Prostate gland (tissue), 2 donors: ENCODE measurements at regions of chr3 and their contacts with region 1.

Region 1: GRCh38 chr3:58630076-58630709 is 36.4 kb downstream of the FAM3D start:
- DNase-seq: peak; percentile 63
- H3K4me3 ChIP-seq: no peak overlapping the region
- H3K27ac ChIP-seq: peak overlapping the region; percentile 50 to 71
- H3K4me1 ChIP-seq: peaks cover 22% of the 10 kb centered on the region
- H3K27me3 ChIP-seq: no peaks in the 10 kb centered on the region
- CTCF ChIP-seq: peak; percentile 91 to 98 (median 96)
- POLR2A ChIP-seq: no peak

Region 2: DNA sequence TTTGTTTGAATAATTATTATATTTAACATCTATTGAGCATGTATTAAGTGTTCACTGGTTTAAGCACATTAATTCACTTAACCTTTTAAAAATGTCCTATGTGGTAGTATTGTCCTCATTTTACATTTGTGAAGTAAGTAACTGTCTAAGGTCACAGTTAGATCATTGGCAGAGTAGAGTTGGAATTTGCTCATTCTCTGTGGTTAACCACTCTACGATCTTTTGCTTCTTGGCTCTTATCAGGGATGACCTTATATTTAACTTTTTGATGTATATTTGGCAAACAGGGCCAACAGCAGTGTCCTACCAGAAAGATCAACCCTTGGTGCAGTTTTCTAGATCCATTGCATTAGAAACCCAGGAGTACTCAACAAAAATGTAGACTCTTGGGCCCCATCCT is 263.5 kb before region 1 on chr3:
- intact Hi-C with region 1: no loop called
- DNase-seq: no peak
- H3K4me3 ChIP-seq: no peak overlapping the region
- H3K27ac ChIP-seq: no peak overlapping the region
- H3K4me1 ChIP-seq: no peaks in the 10 kb centered on the region
- H3K27me3 ChIP-seq: no peaks in the 10 kb centered on the region
- CTCF ChIP-seq: no peak
- POLR2A ChIP-seq: no peak

Region 3: DNA sequence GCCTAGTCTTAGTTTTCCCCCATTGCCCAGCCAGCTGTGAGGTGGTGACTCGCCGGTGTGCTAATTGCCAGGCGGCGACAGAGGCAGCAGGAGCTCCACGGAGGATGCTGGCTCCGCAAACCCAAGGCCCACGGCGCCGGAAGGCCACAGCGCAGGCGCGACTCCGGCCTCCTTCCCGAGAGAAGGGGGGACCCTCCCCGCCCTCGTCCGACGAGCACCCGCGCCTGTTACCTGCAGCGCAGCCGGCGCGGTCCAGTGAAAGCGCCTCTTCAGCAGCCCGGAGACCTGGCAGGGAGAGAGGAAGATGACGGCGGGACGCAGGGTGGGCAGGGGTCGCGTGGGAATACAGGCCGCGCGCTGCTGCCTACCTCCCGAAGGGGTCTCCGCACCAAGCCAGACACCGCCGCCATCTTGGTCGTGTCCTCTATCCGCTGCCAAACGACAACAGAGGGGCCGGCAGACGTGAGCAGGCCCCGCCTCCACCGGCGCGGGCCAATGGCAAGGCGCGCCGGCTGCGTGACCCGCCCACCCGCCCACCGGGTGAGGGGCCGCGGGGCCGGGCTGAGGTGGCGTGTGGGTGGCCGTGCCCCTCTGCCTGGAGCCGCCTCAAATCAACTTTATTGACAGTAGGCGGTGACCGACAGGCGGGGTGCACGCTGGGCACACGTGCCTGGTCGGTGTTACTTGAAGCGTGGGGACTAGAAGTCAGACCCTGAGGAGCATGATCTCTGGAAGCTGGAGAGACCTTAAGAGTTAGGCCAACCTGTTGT is 196.6 kb before region 1 on chr3 and contains the start of gene PDHB:
- intact Hi-C with region 1: loop called (anchors 10 kb)
- DNase-seq: peak; percentile 87
- H3K4me3 ChIP-seq: peak within 1 kb of the TSS; percentile 68 to 82
- H3K27ac ChIP-seq: peak within 1 kb of the TSS; percentile 88 to 93
- H3K4me1 ChIP-seq: peaks cover 3% of the 10 kb centered on the region
- H3K27me3 ChIP-seq: no peaks in the 10 kb centered on the region
- CTCF ChIP-seq: peak in 1 of 4 experiments; percentile 18
- POLR2A ChIP-seq: peak; percentile 70
- total RNA-seq, gene PDHB: 69.6 to 129 TPM

Region 4: DNA sequence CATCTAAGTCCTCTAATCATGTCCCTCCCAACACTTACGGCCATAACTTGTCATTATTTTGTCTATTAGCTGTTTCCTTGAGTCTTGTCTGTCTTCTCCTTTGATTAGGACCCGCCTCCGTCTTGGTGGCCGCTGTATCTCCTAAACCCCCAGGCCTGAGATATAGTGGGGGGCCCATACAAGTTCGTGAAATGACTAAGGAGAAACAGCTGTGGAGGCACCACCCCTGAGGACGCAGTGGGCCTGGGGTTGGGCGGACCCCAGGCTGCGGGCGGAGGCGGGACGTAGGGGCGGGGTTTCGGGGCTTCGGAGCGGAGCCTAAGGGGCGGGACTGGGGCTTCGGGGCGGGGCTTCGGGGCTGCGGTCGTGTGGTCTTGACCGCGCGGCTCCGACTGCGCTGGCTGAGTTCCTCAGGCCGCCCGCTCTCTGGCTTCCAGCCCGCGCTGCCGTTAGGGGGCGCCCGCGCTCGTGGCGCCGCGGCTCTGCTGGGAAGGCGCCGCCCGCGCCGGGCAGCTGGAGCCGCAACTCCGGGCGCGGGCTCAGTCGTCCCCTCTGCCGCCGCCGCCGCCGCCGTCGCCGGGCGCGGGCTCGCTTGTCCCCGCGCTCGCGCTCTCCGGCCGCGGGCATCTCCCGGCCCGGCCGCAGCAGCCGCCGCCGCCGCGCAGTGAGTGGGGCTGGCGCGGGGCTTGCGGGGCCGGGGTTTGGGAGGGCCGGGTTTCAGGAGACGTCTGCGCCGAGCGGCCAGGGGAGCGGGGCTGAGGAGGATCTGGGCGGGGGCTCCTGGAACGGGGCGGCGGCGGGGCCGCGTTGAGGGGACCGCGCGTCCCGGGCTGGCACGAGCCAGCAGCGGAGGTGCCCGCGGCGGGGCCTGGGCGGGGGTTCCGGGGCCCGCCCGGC is 138.4 kb before region 1 on chr3 and contains the start of gene KCTD6:
- intact Hi-C with region 1: loop called (anchors 5 kb)
- DNase-seq: peak; percentile 86
- H3K4me3 ChIP-seq: peak within 1 kb of the TSS; percentile 64 to 92
- H3K27ac ChIP-seq: peak within 1 kb of the TSS; percentile 75 to 77
- H3K4me1 ChIP-seq: peaks cover 7% of the 10 kb centered on the region
- H3K27me3 ChIP-seq: no peaks in the 10 kb centered on the region
- CTCF ChIP-seq: peak; percentile 53 to 92 (median 71)
- POLR2A ChIP-seq: no peak
- total RNA-seq, gene KCTD6: 7.2 to 14.9 TPM

Region 5: GRCh38 chr3:58568572-58569286 is 61.5 kb before region 1 on chr3:
- intact Hi-C with region 1: loop called (anchors 2 kb)
- DNase-seq: peak; percentile 77
- H3K4me3 ChIP-seq: no peak overlapping the region
- H3K27ac ChIP-seq: no peak overlapping the region
- H3K4me1 ChIP-seq: no peaks in the 10 kb centered on the region
- H3K27me3 ChIP-seq: no peaks in the 10 kb centered on the region
- CTCF ChIP-seq: peak; percentile 85 to 98 (median 95)
- POLR2A ChIP-seq: no peak

Region 6: GRCh38 chr3:58577269-58577821 is 52.8 kb before region 1 on chr3 and contains the start of gene FAM107A:
- intact Hi-C with region 1: loop called (anchors 2 kb)
- DNase-seq: peak; percentile 86
- H3K4me3 ChIP-seq: peak within 1 kb of the TSS; percentile 29
- H3K27ac ChIP-seq: peak within 1 kb of the TSS; percentile 74 to 81
- H3K4me1 ChIP-seq: peaks cover 9% of the 10 kb centered on the region
- H3K27me3 ChIP-seq: no peaks in the 10 kb centered on the region
- CTCF ChIP-seq: peak in 3 of 4 experiments; percentile 39 to 63 (median 57)
- POLR2A ChIP-seq: no peak
- total RNA-seq, gene FAM107A: 54.5 to 80.2 TPM

Region 7: GRCh38 chr3:58766587-58767282 is 136.5 kb after region 1 on chr3:
- intact Hi-C with region 1: no loop called
- DNase-seq: no peak
- H3K4me3 ChIP-seq: no peak overlapping the region
- H3K27ac ChIP-seq: no peak overlapping the region
- H3K4me1 ChIP-seq: no peaks in the 10 kb centered on the region
- H3K27me3 ChIP-seq: no peaks in the 10 kb centered on the region
- CTCF ChIP-seq: no peak
- POLR2A ChIP-seq: no peak